ENCODE measurements at regions of chrX and their contacts with region 1.

Region 1: DNA sequence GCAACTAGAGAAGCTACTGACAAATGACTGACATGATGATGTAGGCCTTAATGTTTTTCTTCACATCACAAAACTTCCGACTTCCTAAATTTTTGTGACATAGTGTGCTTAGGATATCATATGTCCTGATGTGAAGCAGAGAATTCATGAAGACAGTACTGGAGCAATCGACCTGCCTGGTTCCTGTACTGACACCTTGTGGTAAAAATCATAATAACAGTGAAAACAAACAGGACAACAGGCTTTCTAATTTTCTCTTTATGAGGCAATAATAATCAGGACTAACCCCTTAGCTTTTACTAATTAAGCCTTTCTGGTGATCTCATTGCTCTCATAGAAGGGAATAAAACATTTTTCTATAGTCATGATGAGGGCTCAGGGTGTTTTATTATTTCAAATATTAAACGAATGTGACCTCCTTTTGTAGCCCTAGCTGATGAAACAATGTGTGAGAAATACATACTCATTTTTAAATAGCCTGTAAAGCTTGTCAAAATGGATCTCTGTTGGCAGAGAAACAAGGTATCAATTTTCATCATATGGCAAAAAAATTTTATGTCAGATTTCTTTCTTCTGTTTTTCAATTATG is 158.4 kb downstream of the TENT5D start:
- DNase-seq: no peak
- H3K4me3 ChIP-seq: no peak overlapping the region
- H3K27ac ChIP-seq: no peak overlapping the region
- H3K4me1 ChIP-seq: no peaks in the 10 kb centered on the region
- H3K27me3 ChIP-seq: no peaks in the 10 kb centered on the region
- CTCF ChIP-seq: peak in 3 of 4 experiments; percentile 16 to 51 (median 31)
- POLR2A ChIP-seq: no peak

Region 2: GRCh38 chrX:80282535-80282934 is 296.1 kb before region 1 on chrX:
- intact Hi-C with region 1: loop called (anchors 5 kb)
- DNase-seq: no peak
- H3K4me3 ChIP-seq: no peak overlapping the region
- H3K27ac ChIP-seq: no peak overlapping the region
- H3K4me1 ChIP-seq: no peaks in the 10 kb centered on the region
- H3K27me3 ChIP-seq: no peaks in the 10 kb centered on the region
- CTCF ChIP-seq: no peak
- POLR2A ChIP-seq: no peak

Region 3: GRCh38 chrX:80430826-80431504 is 147.6 kb before region 1 on chrX:
- intact Hi-C with region 1: loop called (anchors 5 kb)
- DNase-seq: no peak
- H3K4me3 ChIP-seq: no peak overlapping the region
- H3K27ac ChIP-seq: no peak overlapping the region
- H3K4me1 ChIP-seq: no peaks in the 10 kb centered on the region
- H3K27me3 ChIP-seq: no peaks in the 10 kb centered on the region
- CTCF ChIP-seq: peak in 1 of 4 experiments; percentile 16
- POLR2A ChIP-seq: no peak

Region 4: DNA sequence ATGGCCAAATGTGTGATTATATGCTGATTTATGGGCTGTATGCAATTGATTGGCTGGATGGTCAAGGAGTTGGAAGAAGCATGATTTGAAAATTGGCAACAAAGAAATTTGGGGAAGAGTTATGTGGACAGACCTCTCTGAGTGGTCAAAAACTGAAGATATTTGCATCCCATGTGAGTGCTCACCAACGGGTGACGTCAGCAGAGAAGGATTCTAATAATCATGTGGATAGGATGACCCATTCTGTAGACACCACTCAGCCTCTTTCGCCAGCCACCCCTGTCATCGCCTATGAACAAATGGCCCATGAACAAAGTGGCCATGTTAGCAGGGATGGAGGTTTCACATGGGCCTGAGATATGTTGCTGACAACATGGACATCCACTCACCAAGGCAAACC is 55.0 kb before region 1 on chrX:
- intact Hi-C with region 1: no loop called
- DNase-seq: no peak
- H3K4me3 ChIP-seq: no peak overlapping the region
- H3K27ac ChIP-seq: no peak overlapping the region
- H3K4me1 ChIP-seq: no peaks in the 10 kb centered on the region
- H3K27me3 ChIP-seq: no peaks in the 10 kb centered on the region
- CTCF ChIP-seq: no peak
- POLR2A ChIP-seq: no peak

Measured in prostate gland (tissue), 2 donors.